WTC11 (cell line): ENCODE measurements at regions of chr12 and their contacts with region 1.

Region 1: DNA sequence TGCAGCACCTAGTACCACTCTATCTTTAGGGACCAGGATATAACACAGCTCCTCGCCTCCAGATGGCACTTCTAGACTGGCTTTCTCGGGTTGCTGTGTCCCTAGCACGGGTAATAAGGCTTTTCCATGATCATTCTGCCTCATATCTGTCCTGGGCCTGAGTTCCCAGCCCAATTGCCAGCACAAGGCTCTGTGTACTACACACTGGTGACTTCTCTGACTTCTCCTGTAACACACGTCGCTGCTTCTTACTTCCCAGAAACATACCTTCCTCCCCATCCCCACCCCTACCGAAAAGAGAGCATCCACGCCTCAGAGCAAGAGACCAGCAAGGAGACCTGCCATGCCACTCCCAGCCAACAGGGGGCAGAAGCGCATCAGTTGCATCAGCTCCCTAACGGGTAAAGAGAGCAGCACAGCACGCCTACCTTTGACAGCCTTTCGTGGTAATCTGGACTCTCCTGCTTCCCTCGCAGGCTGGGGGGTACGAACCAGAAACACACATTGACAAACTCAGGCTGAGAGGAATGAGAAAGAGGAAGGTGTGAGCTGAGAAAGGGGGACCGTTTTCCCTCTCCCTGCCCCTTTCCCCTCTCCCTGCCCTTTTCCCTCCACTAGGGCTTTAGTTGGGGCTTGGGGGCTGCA is 21.2 kb upstream of the ZNF740 start:
- DNase-seq: peak; percentile 95
- ATAC-seq: peak; percentile 95
- H3K4me3 Mint-ChIP-seq: peak overlapping the region; percentile 50
- H3K27ac Mint-ChIP-seq: no peak overlapping the region
- H3K4me1 Mint-ChIP-seq: peaks cover 5% of the 10 kb centered on the region
- H3K27me3 Mint-ChIP-seq: peaks cover 63% of the 10 kb centered on the region
- CTCF ChIP-seq: peak; percentile 97

Region 2: GRCh38 chr12:52741392-52742195 is 417.7 kb before region 1 on chr12:
- CTCF ChIA-PET with region 1: no interaction called
- POLR2A ChIA-PET with region 1: no interaction called
- DNase-seq: peak; percentile 84
- ATAC-seq: peak; percentile 83
- H3K4me3 Mint-ChIP-seq: no peak overlapping the region
- H3K27ac Mint-ChIP-seq: no peak overlapping the region
- H3K4me1 Mint-ChIP-seq: no peaks in the 10 kb centered on the region
- H3K27me3 Mint-ChIP-seq: peaks cover 19% of the 10 kb centered on the region
- CTCF ChIP-seq: no peak

Region 3: GRCh38 chr12:53065975-53066931 is 93.1 kb before region 1 on chr12:
- CTCF ChIA-PET with region 1: interaction called, 52 read pairs
- POLR2A ChIA-PET with region 1: no interaction called
- DNase-seq: peak; percentile 87
- ATAC-seq: peak; percentile 73
- H3K4me3 Mint-ChIP-seq: no peak overlapping the region
- H3K27ac Mint-ChIP-seq: no peak overlapping the region
- H3K4me1 Mint-ChIP-seq: peaks cover 23% of the 10 kb centered on the region
- H3K27me3 Mint-ChIP-seq: peaks cover 21% of the 10 kb centered on the region
- CTCF ChIP-seq: peak; percentile 96

Region 4: DNA sequence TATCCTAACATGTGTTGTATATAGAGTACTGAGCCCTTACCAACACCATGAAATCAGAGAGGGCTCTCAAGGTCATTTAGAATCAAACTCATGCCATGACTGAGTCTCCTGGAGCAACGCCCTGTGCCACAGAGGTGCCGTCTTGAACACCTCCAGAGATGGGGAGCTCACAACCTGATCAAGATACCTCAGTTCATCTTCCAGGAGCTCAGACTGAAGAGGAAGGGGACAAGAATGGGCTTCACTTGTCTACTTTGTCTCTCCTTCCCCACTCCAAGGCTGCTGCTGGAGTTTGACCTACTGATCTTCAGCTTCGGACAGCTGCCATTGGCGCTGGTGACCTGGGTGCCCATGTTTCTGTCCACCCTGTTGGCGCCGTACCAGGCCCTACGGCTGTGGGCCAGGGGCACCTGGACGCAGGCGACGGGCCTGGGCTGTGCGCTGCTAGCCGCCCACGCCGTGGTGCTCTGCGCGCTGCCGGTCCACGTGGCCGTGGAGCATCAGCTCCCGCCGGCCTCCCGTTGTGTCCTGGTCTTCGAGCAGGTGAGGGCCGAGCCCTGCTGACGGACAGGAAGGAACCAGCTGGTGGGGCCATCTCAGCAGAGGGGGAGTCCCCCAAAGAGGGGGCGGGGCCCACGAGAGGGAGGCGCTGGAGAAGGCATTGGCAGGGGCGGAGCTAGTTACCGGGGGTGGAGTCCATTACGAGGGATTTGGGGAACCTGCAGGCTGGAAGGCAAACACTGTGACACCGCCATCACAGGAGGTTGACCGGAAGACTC is 44.0 kb before region 1 on chr12:
- CTCF ChIA-PET with region 1: interaction called, 13 read pairs
- POLR2A ChIA-PET with region 1: interaction called, 4 read pairs
- DNase-seq: peak; percentile 92
- ATAC-seq: peak; percentile 98
- H3K4me3 Mint-ChIP-seq: no peak overlapping the region
- H3K27ac Mint-ChIP-seq: no peak overlapping the region
- H3K4me1 Mint-ChIP-seq: 0 out of 2 replicates have a peak, but pooled peaks cover 2% of the 10 kb centered on the region
- H3K27me3 Mint-ChIP-seq: peaks cover 32% of the 10 kb centered on the region
- CTCF ChIP-seq: no peak

Region 5: DNA sequence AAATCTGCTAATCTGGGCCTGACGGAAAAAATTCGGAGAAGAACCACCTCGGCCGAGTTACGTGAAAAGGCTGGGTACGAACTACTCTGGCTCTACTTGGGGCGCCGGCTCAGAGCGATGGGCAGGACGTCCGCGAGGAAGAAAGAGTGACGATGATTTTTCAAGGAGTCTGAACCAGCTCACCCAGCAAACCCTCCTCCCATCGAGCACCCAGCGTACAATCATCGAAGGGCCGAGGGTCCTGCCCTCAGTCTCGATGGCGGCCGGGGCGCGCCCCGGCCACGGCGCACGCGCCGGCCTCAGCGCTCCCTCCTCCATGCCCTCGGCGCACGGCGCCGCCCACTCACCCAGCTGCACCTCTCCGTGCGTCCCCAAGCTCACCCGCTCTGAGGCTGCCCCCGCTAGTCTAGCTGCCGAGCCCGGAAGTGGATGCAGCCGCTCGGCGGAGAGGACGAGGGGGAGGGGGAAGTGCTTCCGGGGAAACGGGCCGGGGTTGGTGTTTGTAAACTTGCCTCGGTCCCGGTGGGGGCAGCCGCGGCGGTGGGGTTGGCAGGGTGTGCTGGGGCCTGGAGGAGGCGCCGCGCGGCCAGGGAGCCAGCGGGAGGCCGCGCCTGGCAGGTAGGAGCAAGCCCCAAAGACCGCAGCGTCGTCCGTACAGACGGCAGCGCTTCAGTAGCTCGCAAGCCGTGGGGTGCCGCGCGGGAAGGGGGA is 21.1 kb after region 1 on chr12 and contains the starts of genes CSAD and ZNF740:
- CTCF ChIA-PET with region 1: interaction called, 70 read pairs
- POLR2A ChIA-PET with region 1: interaction called, 3 read pairs
- DNase-seq: peak; percentile 96
- ATAC-seq: peak; percentile 97
- H3K4me3 Mint-ChIP-seq: peak within 1 kb of the TSS; percentile 91
- H3K27ac Mint-ChIP-seq: peak within 1 kb of the TSS; percentile 93
- H3K4me1 Mint-ChIP-seq: peaks cover 24% of the 10 kb centered on the region
- H3K27me3 Mint-ChIP-seq: peaks cover 48% of the 10 kb centered on the region
- CTCF ChIP-seq: no peak
- total RNA-seq, gene CSAD: 11.5 to 12.6 TPM (median 12.3 TPM) in 3 replicates
- total RNA-seq, gene ZNF740: 26.6 to 36.6 TPM (median 36.1 TPM) in 3 replicates

Region 6: GRCh38 chr12:53213348-53213747 is 54.0 kb after region 1 on chr12:
- CTCF ChIA-PET with region 1: interaction called, 39 read pairs
- POLR2A ChIA-PET with region 1: no interaction called
- DNase-seq: peak; percentile 93
- ATAC-seq: peak; percentile 59
- H3K4me3 Mint-ChIP-seq: 0 out of 2 replicates have a peak overlapping the region, but pooled peaks have one; percentile 2
- H3K27ac Mint-ChIP-seq: peak overlapping the region; percentile 63; the same call in 1 of the 2 replicates
- H3K4me1 Mint-ChIP-seq: peaks cover 57% of the 10 kb centered on the region
- H3K27me3 Mint-ChIP-seq: no peaks in the 10 kb centered on the region
- CTCF ChIP-seq: peak; percentile 97

Region 7: DNA sequence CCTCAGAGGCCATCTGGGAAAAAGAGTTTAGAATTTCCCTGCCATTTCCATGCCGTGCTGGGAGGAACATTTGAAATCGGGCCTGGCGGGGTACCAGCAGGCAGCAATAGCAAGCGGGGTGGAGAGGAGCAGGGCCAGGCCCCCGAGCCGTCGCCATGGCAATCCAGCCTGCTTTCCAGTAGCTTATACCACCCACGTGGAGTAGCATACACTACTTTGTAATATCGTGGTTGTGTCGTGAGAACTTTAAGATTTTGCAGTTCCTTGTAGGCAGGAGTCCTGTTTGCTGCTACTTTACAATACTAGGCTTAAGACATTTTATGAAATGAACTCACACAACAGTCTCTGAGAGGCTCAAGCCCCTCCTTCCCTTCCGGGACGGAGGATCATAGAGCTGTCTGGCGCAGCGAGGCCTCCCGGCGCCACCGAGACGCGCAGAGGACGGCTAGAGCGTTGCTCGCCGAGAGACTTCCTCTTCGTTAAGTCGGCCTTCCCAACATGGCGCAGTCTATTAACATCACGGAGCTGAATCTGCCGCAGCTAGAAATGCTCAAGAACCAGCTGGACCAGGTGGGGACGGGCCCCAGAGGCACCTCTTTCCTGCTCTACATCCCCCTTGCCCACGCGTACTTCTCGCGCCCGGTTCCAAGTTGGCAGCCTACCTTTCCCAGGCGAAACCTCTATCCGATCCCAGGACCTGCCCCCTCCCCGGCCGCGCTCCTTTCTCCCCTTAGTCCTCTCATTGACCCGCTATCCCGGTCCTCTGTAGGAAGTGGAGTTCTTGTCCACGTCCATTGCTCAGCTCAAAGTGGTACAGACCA is 136.0 kb after region 1 on chr12 and contains the start of gene PFDN5:
- CTCF ChIA-PET with region 1: interaction called, 11 read pairs
- POLR2A ChIA-PET with region 1: interaction called, 3 read pairs
- DNase-seq: peak; percentile 85
- ATAC-seq: peak; percentile 85
- H3K4me3 Mint-ChIP-seq: peak within 1 kb of the TSS; percentile 99
- H3K27ac Mint-ChIP-seq: peak within 1 kb of the TSS; percentile 96
- H3K4me1 Mint-ChIP-seq: peaks cover 18% of the 10 kb centered on the region
- H3K27me3 Mint-ChIP-seq: no peaks in the 10 kb centered on the region
- CTCF ChIP-seq: no peak
- total RNA-seq, gene PFDN5: 263 to 286 TPM (median 270 TPM) in 3 replicates

Region 8: DNA sequence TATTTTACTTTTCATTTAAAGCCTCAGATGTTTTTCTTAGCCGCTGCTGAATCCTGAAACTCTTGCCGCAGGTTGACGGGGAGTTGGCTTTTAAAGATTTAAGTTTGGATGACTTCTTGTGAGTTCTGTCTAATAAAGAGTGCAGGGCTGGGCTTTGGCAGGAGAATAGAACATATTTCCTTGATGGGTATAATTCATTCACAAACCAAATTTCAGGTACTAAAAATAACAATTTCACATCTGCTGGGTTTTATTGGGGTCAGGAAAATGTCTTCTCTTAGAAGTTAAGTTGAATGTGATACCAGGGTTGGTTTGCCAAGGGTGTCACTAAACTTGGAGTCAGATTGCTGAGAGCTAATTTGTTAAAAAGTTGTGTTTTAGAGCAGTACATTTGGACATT is 230.4 kb after region 1 on chr12:
- CTCF ChIA-PET with region 1: no interaction called
- POLR2A ChIA-PET with region 1: no interaction called
- DNase-seq: no peak
- ATAC-seq: no peak
- H3K4me3 Mint-ChIP-seq: no peak overlapping the region
- H3K27ac Mint-ChIP-seq: peak overlapping the region; percentile 32
- H3K4me1 Mint-ChIP-seq: peaks cover 16% of the 10 kb centered on the region
- H3K27me3 Mint-ChIP-seq: no peaks in the 10 kb centered on the region
- CTCF ChIP-seq: no peak

Region 9: DNA sequence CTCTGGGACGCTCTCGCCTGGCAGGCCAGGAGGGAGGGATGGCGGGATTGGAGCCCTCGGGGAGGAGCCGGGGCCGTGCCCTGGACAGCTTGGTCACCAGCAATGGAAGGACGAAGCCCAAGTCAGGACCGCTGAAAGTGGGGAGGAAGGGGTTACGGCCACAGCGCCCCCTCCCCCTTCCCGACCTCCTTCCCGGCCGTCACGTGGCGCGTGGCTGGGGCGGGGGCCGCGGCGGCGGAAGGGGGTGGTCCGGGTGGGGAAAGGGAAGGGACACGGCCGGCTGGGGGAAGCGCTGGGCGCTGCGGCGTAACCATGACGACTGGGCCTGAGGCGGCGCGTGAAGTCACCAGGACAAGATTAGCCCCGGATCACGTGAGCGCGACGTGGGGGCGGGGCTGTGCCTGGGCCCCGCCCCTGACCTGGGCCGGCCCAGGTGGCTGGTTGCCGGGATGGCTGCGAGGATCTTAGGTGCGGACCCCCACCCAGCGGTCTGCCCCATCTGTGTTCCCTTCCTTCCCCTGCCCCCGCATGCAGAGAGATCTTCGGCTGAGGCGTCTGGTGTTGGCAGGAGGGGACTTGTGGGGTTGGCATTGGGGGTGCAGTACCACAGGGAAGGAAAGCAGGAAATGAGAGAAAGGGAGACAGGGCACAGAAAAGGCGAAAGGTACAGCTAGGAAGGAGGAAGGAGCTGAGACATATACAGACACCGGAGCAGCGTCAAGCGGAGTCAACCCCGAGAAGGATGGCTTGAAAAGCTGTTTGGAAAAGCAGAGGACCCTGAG is 333.7 kb after region 1 on chr12:
- CTCF ChIA-PET with region 1: no interaction called
- POLR2A ChIA-PET with region 1: no interaction called
- DNase-seq: peak; percentile 96
- ATAC-seq: peak; percentile 78
- H3K4me3 Mint-ChIP-seq: peak overlapping the region; percentile 88
- H3K27ac Mint-ChIP-seq: peak overlapping the region; percentile 99
- H3K4me1 Mint-ChIP-seq: peaks cover 46% of the 10 kb centered on the region
- H3K27me3 Mint-ChIP-seq: no peaks in the 10 kb centered on the region
- CTCF ChIP-seq: no peak